Esophagus squamous epithelium (tissue), 5 donors: ENCODE measurements at regions of chr16 and their contacts with region 1.

Region 1: DNA sequence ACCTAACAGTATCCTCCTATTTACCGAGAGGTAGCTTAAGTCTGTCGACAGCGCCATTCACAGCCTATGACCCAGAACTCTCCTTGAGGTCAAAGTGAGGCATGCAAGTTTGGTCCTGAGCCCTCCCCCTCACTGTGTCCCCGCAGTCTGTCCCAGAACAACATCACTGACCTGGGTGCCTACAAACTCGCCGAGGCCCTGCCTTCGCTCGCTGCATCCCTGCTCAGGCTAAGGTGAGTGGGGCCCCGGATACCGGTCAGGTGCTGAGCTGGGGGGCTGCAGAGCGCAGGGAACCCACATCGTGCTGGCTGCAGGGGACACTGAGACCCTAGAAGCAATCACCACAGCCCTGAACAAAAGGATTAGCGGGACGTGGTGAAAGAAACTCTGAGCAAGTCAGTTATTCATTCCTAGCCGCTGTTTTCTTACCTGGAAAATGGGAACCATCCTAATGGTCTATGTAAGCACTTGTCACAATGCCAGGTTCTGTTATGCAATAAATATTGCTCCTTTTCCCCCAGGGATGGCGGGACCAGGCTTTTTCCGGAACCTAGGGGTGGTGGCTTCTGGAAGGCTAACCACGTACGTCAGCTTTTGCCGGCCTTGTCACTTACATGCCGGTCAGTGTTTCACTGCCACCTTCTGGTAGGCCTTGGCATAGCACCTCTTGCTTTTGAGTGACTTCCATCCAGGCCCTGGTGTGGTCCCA is 23.8 kb downstream of the DEXI start:
- DNase-seq: peak; percentile 38
- H3K4me3 ChIP-seq: peak overlapping the region in 1 of 4 donors; percentile 7
- H3K27ac ChIP-seq: peak overlapping the region in 2 of 4 donors; percentile 42 to 53
- H3K4me1 ChIP-seq: peaks cover 0 to 50% (median 15%) of the 10 kb centered on the region in 3 donors
- H3K27me3 ChIP-seq: no peaks in the 10 kb centered on the region
- CTCF ChIP-seq: peak; percentile 82 to 99 (median 96)
- POLR2A ChIP-seq: no peak

Region 2: DNA sequence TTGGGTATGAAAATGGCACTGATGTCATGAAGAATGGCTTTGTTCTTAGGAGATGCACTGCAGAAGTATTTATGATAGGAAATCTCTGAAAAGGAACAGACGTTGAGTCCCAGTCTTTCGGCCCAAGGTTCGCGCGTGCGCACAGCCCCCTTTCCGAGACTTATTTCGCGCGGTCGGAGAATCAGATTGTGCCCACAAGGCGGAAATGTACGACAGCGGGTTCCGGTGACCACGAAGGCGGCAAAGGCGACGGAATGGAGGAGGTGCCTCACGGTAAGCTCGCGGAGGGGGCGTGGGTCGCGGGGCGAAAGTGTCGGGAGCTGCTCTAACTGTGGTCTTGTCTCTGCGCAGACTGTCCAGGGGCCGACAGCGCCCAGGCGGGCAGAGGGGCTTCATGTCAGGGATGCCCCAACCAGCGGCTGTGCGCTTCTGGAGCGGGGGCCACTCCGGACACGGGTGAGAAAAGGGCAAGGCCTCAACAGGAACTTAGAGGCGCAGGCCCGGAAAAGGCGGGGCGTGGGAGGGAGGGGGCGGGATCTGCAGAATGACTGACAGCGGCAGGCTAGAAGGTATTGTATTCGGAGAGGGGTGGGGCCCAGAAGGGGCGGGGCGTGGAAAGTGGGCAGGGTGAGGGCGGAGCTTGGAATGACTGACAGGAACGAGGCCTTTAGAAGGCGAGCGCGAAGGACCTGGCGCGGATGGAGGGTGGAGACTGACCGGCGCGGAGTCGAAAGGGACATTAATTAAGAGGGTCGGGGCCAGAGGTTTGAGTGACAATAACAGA is 174.6 kb before region 1 on chr16 and contains the start of gene NUBP1:
- intact Hi-C with region 1: no loop called
- DNase-seq: peak; percentile 95
- H3K4me3 ChIP-seq: peak within 1 kb of the TSS; percentile 52 to 73 (median 64)
- H3K27ac ChIP-seq: peak within 1 kb of the TSS; percentile 95 to 99 (median 96)
- H3K4me1 ChIP-seq: peaks cover 0 to 38% (median 25%) of the 10 kb centered on the region in 3 donors
- H3K27me3 ChIP-seq: no peaks in the 10 kb centered on the region
- CTCF ChIP-seq: peak in 3 of 6 experiments; percentile 21 to 27 (median 23)
- POLR2A ChIP-seq: peak in 3 of 4 donors; percentile 30 to 78 (median 68)
- total RNA-seq, gene NUBP1: 18.9 to 25.6 (median 21.1) TPM

Region 3: GRCh38 chr16:10765772-10766171 is 152.7 kb before region 1 on chr16:
- intact Hi-C with region 1: loop called (anchors 10 kb)
- DNase-seq: no peak
- H3K4me3 ChIP-seq: no peak overlapping the region
- H3K27ac ChIP-seq: no peak overlapping the region
- H3K4me1 ChIP-seq: peaks cover 0 to under 1% (median 0%) of the 10 kb centered on the region in 3 donors
- H3K27me3 ChIP-seq: no peaks in the 10 kb centered on the region
- CTCF ChIP-seq: no peak
- POLR2A ChIP-seq: no peak

Region 4: GRCh38 chr16:11051879-11052808 is 133.7 kb after region 1 on chr16:
- intact Hi-C with region 1: no loop called
- DNase-seq: no peak
- H3K4me3 ChIP-seq: no peak overlapping the region
- H3K27ac ChIP-seq: no peak overlapping the region
- H3K4me1 ChIP-seq: peaks cover 0 to 29% (median 4%) of the 10 kb centered on the region in 3 donors
- H3K27me3 ChIP-seq: no peaks in the 10 kb centered on the region
- CTCF ChIP-seq: no peak
- POLR2A ChIP-seq: no peak